Endothelial cell of umbilical vein (primary cell): ENCODE measurements at regions of chr17 and their contacts with region 1.

Region 1: GRCh38 chr17:49315551-49316257 is 46.3 kb downstream of the ZNF652 start:
- DNase-seq: peak; percentile 94
- H3K4me3 ChIP-seq: no peak overlapping the region
- H3K27ac ChIP-seq: no peak overlapping the region
- H3K4me1 ChIP-seq: peaks cover 11% of the 10 kb centered on the region
- H3K27me3 ChIP-seq: no peaks in the 10 kb centered on the region
- CTCF ChIP-seq: peak; percentile 64 to 78
- POLR2A ChIP-seq: no peak

Region 2: GRCh38 chr17:49193432-49194211 is 122.1 kb before region 1 on chr17:
- CTCF ChIA-PET with region 1: no interaction called
- POLR2A ChIA-PET with region 1: no interaction called
- dilution Hi-C with region 1: no loop called
- intact Hi-C with region 1: no loop called
- DNase-seq: peak; percentile 73
- H3K4me3 ChIP-seq: peak overlapping the region; percentile 31 to 67 (median 62)
- H3K27ac ChIP-seq: peak overlapping the region; percentile 62
- H3K4me1 ChIP-seq: peaks cover 8% of the 10 kb centered on the region
- H3K27me3 ChIP-seq: no peaks in the 10 kb centered on the region
- CTCF ChIP-seq: no peak
- POLR2A ChIP-seq: peak; percentile 54

Region 3: GRCh38 chr17:49260011-49260921 is 55.4 kb before region 1 on chr17:
- CTCF ChIA-PET with region 1: no interaction called
- POLR2A ChIA-PET with region 1: no interaction called
- dilution Hi-C with region 1: no loop called
- intact Hi-C with region 1: no loop called
- DNase-seq: peak; percentile 87
- H3K4me3 ChIP-seq: peak overlapping the region; percentile 43 to 51 (median 51)
- H3K27ac ChIP-seq: peak overlapping the region; percentile 85
- H3K4me1 ChIP-seq: peaks cover 14% of the 10 kb centered on the region
- H3K27me3 ChIP-seq: no peaks in the 10 kb centered on the region
- CTCF ChIP-seq: no peak
- POLR2A ChIP-seq: peak; percentile 76

Region 4: GRCh38 chr17:49277638-49278037 is 38.1 kb before region 1 on chr17:
- CTCF ChIA-PET with region 1: no interaction called
- POLR2A ChIA-PET with region 1: no interaction called
- dilution Hi-C with region 1: no loop called
- intact Hi-C with region 1: no loop called
- DNase-seq: no peak
- H3K4me3 ChIP-seq: no peak overlapping the region
- H3K27ac ChIP-seq: no peak overlapping the region
- H3K4me1 ChIP-seq: no peaks in the 10 kb centered on the region
- H3K27me3 ChIP-seq: no peaks in the 10 kb centered on the region
- CTCF ChIP-seq: no peak
- POLR2A ChIP-seq: no peak

Region 5: DNA sequence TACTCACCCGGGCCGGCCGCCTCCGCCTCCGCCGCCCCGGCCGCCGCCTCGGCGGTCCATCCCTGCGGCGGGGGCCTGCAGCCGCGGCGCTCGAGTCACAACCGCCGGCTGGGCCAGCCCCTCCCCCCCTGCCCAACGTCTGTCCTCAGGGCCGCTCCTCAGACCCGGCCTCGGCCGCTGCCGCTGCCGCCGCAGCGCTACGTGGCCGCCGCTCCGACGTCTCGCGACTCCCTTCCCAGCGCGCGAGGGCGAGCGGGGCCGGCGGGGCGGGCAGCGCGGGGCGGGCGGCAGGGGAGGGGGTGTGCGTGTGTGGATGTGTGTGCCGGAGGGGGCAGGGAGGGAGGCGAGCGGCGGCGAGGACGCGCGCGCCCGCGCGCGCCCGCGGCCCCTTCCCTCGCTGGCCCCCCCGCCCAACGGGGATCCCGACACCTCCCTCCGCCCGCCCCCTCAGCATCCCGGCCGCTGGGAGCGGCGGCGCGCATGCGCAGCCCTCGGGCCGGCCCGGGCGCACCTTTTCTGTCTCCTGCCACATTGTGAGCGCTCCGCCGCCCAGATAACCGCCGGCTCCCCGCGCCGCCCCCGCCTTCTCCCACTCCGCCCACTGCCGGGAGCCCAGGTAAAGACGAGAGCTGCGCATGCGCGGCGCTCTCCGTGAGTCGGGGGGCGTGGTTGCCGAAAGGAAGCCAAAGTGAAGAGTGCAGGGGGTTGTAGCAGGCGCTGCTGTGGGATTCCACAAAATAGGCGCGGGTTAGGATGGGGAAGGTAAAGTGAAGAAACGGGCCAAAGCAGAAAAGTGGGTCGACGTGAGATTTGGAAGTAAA is 46.4 kb after region 1 on chr17 and contains the start of gene ZNF652:
- CTCF ChIA-PET with region 1: interaction called, 17 read pairs
- POLR2A ChIA-PET with region 1: no interaction called
- dilution Hi-C with region 1: no loop called
- intact Hi-C with region 1: loop called (anchors 1 kb)
- DNase-seq: peak; percentile 86
- H3K4me3 ChIP-seq: peak within 1 kb of the TSS; percentile 68 to 75 (median 70)
- H3K27ac ChIP-seq: peak within 1 kb of the TSS; percentile 34
- H3K4me1 ChIP-seq: peaks cover 19% of the 10 kb centered on the region
- H3K27me3 ChIP-seq: no peaks in the 10 kb centered on the region
- CTCF ChIP-seq: no peak
- POLR2A ChIP-seq: no peak
- total RNA-seq, gene ZNF652: 18.2 and 18.6 TPM in 2 replicates

Region 6: GRCh38 chr17:49370971-49371834 is 55.5 kb after region 1 on chr17:
- CTCF ChIA-PET with region 1: interaction called, 36 read pairs
- POLR2A ChIA-PET with region 1: no interaction called
- dilution Hi-C with region 1: no loop called
- intact Hi-C with region 1: no loop called
- DNase-seq: no peak
- H3K4me3 ChIP-seq: no peak overlapping the region
- H3K27ac ChIP-seq: no peak overlapping the region
- H3K4me1 ChIP-seq: no peaks in the 10 kb centered on the region
- H3K27me3 ChIP-seq: no peaks in the 10 kb centered on the region
- CTCF ChIP-seq: no peak
- POLR2A ChIP-seq: no peak

Region 7: DNA sequence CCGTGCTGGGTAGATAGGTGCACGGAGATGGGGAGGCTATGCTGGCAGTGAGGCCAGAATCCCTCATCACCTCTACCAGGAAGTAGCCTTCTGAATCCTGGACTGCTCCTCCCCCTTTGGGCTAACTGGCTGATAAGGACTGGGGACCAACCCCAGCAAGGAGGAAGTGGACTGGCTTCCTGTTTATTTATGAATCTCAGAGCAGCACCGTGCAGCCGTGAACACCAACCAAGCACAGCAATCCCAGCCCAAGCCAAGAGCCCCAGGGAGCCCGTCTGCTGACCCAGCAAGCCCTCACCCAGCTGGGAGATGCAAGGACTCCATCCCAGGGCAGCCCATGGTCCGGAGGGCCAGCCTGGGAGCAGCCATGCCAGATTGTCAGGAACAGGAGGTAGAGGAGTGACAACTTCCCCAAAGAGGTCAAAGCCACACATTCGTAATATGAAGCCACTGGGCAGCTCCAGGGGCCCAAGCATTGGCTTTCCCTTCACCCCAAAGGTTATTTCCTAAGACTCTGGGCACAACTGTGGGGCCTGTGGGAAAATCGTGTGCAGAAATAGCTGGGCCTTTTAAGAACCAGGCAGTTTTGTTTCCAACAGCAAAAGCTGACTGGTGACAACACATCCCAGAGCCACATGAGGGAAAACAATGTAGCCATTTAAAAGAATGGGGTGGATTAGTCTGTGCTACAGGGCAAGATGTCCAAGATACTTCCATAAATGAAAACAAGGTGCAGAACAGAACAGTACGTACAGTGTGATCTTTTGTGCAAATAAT is 75.0 kb after region 1 on chr17:
- CTCF ChIA-PET with region 1: interaction called, 79 read pairs
- POLR2A ChIA-PET with region 1: no interaction called
- dilution Hi-C with region 1: no loop called
- intact Hi-C with region 1: loop called (anchors 1 kb)
- DNase-seq: peak; percentile 29
- H3K4me3 ChIP-seq: no peak overlapping the region
- H3K27ac ChIP-seq: peak overlapping the region; percentile 33
- H3K4me1 ChIP-seq: peaks cover 19% of the 10 kb centered on the region
- H3K27me3 ChIP-seq: no peaks in the 10 kb centered on the region
- CTCF ChIP-seq: no peak
- POLR2A ChIP-seq: no peak

Region 8: DNA sequence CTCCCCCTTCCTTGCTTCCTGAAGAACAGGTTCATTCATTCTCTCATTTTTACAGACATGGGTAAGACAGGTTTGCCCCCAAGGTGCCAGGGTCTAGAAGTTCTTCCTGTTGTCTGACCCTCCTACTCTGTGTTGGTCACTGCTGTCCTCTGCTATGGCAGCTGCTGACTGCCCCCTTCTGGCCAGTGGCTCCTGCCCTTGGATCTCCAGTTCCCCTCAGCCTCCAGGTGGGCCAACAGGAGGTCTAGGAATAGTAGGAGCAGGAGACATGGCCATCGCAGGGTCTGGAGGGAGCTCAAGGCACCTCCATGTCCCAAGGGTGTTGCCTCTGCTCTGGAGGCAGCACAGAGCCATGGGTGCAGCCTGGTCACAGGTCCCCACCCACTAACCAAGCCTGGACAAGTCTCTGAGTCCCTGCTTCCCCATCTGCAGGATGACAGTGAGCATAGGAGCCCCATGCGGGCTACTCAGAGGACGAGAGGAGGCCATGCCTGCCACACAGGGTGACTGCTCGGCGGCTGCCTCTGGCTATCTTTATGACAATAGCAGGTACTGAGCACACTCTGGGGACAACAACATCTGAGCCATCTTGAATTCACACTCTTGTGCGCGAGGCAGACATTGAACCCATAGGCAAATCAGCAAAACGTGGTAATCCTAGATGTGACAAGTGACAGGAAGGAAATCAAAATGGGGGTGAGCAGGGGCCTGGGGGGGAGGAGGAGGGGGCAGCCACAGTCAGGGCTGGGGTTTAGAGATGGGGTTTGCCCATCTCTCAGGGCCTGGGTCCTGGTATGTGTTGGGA is 233.0 kb after region 1 on chr17:
- CTCF ChIA-PET with region 1: no interaction called
- POLR2A ChIA-PET with region 1: no interaction called
- dilution Hi-C with region 1: no loop called
- intact Hi-C with region 1: loop called (anchors 2 kb)
- DNase-seq: no peak
- H3K4me3 ChIP-seq: no peak overlapping the region
- H3K27ac ChIP-seq: no peak overlapping the region
- H3K4me1 ChIP-seq: no peaks in the 10 kb centered on the region
- H3K27me3 ChIP-seq: no peaks in the 10 kb centered on the region
- CTCF ChIP-seq: peak; percentile 25 to 59
- POLR2A ChIP-seq: no peak